Psoas muscle (tissue), 8 donors: ENCODE measurements at regions of chr14 and their contacts with region 1.

Region 1: DNA sequence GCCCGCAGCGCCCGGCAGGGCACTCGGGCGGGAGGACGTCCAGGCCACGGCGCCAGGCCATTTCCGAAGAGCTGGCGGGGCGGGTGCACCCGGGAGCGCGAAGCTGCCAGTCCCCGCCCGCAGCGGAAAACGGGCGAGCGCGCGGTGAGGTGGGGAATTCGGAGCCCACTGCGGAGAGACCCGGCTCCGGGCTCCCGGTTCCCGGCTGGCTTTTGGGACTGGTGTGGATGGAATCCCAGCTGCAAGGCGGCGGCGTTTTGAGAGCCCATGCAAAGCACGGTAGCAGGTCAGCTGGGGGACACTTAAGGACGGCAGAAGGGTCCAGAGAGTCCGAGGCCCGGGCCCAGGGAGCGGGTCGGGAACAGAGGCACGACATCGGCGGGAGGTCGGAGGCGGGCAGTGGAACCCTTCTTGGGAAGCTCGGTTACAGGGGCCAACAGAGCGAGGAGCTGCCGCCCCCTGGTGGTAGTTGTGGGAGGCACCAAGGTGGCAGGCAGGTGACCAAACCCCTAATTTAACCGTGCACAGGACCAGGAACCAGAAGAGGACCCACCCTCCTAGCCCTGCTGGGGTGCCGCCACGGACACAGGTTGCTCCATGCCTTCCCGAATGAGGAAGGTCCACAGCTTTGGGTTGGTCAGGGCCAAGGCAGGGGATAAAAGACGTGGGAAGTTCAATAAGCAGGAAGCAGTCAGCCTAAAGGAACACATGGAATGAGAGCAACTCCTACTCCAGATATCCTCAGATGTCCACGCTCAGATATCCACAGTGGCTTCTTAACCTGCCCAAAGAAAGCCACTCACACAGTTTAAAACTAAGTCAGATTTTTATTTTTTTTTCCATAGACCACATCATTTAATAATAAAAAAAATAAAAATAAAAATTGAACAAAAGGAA is 685 bp upstream of the CDH24 start:
- DNase-seq: peak; percentile 81 to 92
- ATAC-seq: peak; percentile 76 to 86 (median 82)
- H3K4me3 ChIP-seq: peak overlapping the region; percentile 78
- H3K27ac ChIP-seq: peak overlapping the region; percentile 32
- H3K4me1 ChIP-seq: peaks cover 12% of the 10 kb centered on the region
- H3K27me3 ChIP-seq: no peaks in the 10 kb centered on the region
- CTCF ChIP-seq: peak; percentile 93

Region 2: DNA sequence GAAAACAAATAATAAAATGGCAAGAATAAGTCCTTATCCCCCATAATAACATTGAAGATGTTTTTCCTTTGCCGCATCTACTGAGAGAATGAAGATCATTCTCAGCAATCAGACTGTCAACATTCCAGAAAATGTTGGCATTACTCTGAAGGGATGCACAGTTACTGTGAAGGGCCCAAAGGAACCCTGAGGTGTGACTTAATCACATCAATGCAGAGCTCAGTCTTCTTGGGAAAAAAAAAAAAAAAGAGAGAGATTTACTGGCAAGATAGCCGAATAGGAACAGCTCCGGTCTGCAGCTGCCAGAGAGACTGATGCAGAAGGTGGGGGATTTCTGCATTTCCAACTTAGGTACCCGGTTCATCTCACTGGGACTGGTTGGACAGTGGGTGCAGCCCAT is 372.5 kb before region 1 on chr14:
- intact Hi-C with region 1: no loop called
- DNase-seq: no peak
- ATAC-seq: no peak
- H3K4me3 ChIP-seq: no peak overlapping the region
- H3K27ac ChIP-seq: no peak overlapping the region
- H3K4me1 ChIP-seq: no peaks in the 10 kb centered on the region
- H3K27me3 ChIP-seq: peaks cover 0 to 3% (median 0%) of the 10 kb centered on the region in 3 donors
- CTCF ChIP-seq: no peak

Region 3: DNA sequence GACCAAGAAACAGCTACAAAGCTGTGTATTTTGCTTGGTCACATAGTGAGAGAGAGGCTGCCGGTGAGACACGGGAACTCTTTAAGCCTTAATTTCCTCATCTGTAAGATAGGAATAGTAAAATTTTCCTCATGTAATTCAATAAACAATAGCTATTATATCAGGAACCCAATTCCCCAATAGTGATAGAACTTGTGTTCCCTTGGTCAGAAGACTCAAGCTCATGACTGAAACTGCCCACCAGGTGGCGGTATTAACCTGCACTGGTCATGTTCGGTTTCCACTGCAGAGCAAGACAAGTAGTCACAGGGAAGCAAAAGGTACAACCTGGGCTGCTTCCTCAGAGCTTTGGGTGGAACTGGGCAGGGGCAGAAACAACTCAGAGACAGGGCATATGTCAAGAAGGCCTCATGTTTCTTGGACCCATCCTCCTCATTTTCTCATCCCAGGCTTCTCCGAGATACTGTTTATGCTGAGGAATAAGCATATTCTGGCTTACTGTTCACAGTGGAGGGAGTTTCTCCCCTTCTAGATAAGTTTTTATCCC is 71.4 kb before region 1 on chr14:
- intact Hi-C with region 1: loop called (anchors 1 to 2 kb)
- DNase-seq: peak; percentile 85 to 89
- ATAC-seq: peak; percentile 75 to 81 (median 77)
- H3K4me3 ChIP-seq: no peak overlapping the region
- H3K27ac ChIP-seq: no peak overlapping the region
- H3K4me1 ChIP-seq: peaks cover 8% of the 10 kb centered on the region
- H3K27me3 ChIP-seq: peaks cover 0 to 14% (median 6%) of the 10 kb centered on the region in 3 donors
- CTCF ChIP-seq: peak; percentile 94

Region 4: DNA sequence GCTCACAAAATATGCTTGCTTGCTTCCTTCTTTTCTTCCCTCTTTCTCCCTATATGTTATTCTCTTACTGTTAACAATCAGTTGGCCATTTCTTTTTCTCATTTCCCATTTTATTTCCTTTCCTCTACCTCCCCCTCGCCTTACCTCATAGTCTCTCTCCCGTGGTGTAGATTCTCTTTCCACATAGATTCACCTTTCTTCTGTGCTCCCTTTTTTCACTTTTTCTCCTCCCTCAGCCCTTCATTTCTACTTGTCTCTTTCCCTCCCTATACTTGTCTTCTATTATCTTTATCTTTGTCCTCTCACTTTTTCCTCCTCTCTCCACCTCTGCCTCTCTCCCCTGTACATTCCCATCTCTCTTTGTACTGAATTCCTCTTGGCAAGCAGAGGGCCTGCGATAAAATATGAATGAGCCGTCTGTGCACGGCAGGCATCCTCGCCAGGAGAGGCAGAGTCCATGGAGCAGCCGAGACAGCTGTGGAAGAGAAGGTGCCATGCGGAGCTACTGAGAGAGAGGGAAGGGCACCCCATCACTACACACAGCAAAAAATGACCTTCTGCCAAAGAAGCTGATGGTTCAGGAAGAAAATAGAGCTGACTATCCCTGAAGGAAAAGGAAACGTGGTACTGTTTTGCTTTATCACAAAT is 60.2 kb before region 1 on chr14:
- intact Hi-C with region 1: loop called in 1 of 2 experiments (anchors 2 kb)
- DNase-seq: no peak
- ATAC-seq: no peak
- H3K4me3 ChIP-seq: no peak overlapping the region
- H3K27ac ChIP-seq: no peak overlapping the region
- H3K4me1 ChIP-seq: no peaks in the 10 kb centered on the region
- H3K27me3 ChIP-seq: no peaks in the 10 kb centered on the region
- CTCF ChIP-seq: no peak